ENCODE measurements at regions of chr9 and their contacts with region 1.

Region 1: GRCh38 chr9:116737152-116737546 is 50.0 kb downstream of the TRIM32 start:
- DNase-seq: peak; percentile 61
- H3K4me3 Mint-ChIP-seq: no peak overlapping the region
- H3K27ac Mint-ChIP-seq: no peak overlapping the region
- H3K4me1 Mint-ChIP-seq: peaks cover 2% of the 10 kb centered on the region
- H3K27me3 Mint-ChIP-seq: no peaks in the 10 kb centered on the region

Region 2: GRCh38 chr9:116726602-116727001 is 10.5 kb before region 1 on chr9:
- CTCF ChIA-PET with region 1: interaction called, 12 read pairs
- POLR2A ChIA-PET with region 1: no interaction called
- DNase-seq: no peak
- H3K4me3 Mint-ChIP-seq: no peak overlapping the region
- H3K27ac Mint-ChIP-seq: no peak overlapping the region
- H3K4me1 Mint-ChIP-seq: no peaks in the 10 kb centered on the region
- H3K27me3 Mint-ChIP-seq: no peaks in the 10 kb centered on the region

Region 3: GRCh38 chr9:116860509-116861120 is 123.5 kb after region 1 on chr9:
- CTCF ChIA-PET with region 1: interaction called, 37 read pairs
- POLR2A ChIA-PET with region 1: no interaction called
- DNase-seq: peak; percentile 16
- H3K4me3 Mint-ChIP-seq: no peak overlapping the region
- H3K27ac Mint-ChIP-seq: no peak overlapping the region
- H3K4me1 Mint-ChIP-seq: no peaks in the 10 kb centered on the region
- H3K27me3 Mint-ChIP-seq: no peaks in the 10 kb centered on the region

Region 4: DNA sequence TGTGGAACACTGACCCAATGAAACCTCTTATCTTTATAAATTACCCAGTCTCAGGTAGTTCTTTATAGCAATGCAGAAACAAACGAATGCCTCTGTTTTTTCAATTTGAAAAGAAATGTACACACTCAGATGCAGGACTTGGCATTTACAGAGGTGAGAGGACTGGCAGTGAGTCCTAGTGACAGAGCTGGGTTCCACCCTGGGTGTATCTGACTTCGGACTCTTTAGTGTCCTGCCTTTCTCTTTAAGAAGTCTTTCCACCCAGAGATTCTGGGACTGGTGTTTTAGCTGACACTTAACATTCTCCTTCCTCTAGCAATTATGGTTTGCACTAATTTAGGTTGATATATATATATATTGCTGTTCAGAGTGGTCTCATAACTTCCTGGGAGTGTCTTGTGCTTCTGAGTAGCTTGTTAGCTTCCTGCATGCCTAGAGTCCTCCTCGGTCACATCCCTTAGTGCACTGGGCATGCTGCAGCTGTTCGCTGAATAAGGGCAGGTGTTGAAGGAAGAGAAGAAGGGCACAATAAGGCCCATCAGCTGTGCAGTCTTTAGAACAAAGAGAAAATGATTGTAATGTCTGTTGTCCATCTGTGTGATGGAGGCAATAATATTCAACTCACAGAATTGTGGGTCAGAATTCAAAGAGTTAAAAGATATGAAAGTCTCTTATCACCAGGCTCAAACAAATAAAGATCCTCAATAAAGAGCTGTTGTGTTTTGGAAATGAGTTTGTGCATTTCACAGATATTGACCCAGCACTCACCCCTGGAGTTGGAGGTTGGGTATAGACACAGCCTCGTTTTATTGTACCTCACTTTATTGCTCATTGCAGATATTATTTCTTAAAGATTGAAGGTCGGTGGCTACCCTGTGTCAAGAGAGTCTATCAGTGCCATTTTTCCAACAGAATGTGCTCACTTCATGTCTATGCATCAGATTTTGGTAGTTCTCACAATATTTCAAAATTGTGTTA is 137.1 kb after region 1 on chr9:
- CTCF ChIA-PET with region 1: no interaction called
- POLR2A ChIA-PET with region 1: no interaction called
- DNase-seq: no peak
- H3K4me3 Mint-ChIP-seq: no peak overlapping the region
- H3K27ac Mint-ChIP-seq: no peak overlapping the region
- H3K4me1 Mint-ChIP-seq: no peaks in the 10 kb centered on the region
- H3K27me3 Mint-ChIP-seq: no peaks in the 10 kb centered on the region

Measured in activated CD4-positive, alpha-beta memory T cell treated with anti-CD3 and anti-CD28 coated beads, Interleukin-2, amount 10 ng/mL, durations not matched to agents 7 days and 5 days (primary cell).